Right cardiac atrium (tissue), 5 donors: ENCODE measurements at regions of chr1 and their contacts with region 1.

Region 1: GRCh38 chr1:70354332-70355110 is at the start of gene ANKRD13C:
- DNase-seq: peak; percentile 94 to 97 (median 95)
- ATAC-seq: peak; percentile 99
- H3K4me3 ChIP-seq: peak within 1 kb of the TSS; percentile 55
- H3K27ac ChIP-seq: peak within 1 kb of the TSS; percentile 71
- H3K4me1 ChIP-seq: no peaks in the 10 kb centered on the region
- H3K27me3 ChIP-seq: no peaks in the 10 kb centered on the region
- total RNA-seq, gene ANKRD13C: 10.2 to 14.8 (median 12.2) TPM

Region 2: DNA sequence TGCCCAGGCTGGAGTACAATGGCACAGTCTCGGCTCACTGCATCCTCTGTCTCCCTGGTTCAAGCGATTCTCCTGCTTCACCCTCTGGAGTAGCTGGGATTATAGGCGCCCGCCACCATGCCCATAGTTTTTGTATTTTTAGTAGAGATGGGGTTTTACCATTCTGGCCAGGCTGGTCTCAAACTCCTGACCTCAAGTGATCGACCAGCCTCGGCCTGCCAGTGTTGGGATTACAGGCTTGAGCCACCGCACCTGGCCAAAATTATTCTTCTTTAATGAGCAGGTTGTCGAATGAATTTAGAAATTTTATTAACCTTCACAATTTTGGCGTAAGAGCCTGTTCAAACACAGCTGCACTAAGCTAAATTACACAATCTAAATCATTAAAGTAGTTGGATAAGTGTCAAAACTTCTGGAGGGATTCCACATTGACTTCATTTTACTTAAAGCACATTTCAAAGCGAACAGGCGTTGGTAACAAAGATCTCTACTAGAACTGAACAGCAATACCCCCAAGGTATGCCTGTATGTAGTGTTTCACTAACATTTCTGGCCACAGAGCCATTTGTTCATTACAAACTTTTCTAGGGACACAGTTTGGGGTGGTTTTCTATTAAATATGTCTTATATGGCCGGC is 51.4 kb after region 1 on chr1:
- intact Hi-C with region 1: loop called in 1 of 4 experiments (anchors 10 kb)
- DNase-seq: no peak
- ATAC-seq: no peak
- H3K4me3 ChIP-seq: no peak overlapping the region
- H3K27ac ChIP-seq: no peak overlapping the region
- H3K4me1 ChIP-seq: no peaks in the 10 kb centered on the region
- H3K27me3 ChIP-seq: no peaks in the 10 kb centered on the region